ENCODE measurements at regions of chr12 and their contacts with region 1.

Region 1: GRCh38 chr12:9331218-9331626 is 123.0 kb upstream of the PZP start:
- DNase-seq: peak; percentile 44
- ATAC-seq: peak; percentile 78
- H3K4me3 ChIP-seq: no peak overlapping the region
- H3K27ac ChIP-seq: no peak overlapping the region
- H3K4me1 ChIP-seq: peaks cover 47% of the 10 kb centered on the region
- H3K27me3 ChIP-seq: no peaks in the 10 kb centered on the region
- CTCF ChIP-seq: peak; percentile 98
- EP300 ChIP-seq: no peak
- POLR2A ChIP-seq: no peak
- RAD21 ChIP-seq: peak; percentile 92

Region 2: GRCh38 chr12:9260931-9261330 is 70.3 kb before region 1 on chr12:
- CTCF ChIA-PET with region 1: no interaction called
- POLR2A ChIA-PET with region 1: no interaction called
- in situ Hi-C with region 1: no loop called
- intact Hi-C with region 1: no loop called
- DNase-seq: no peak
- ATAC-seq: no peak
- H3K4me3 ChIP-seq: no peak overlapping the region
- H3K27ac ChIP-seq: no peak overlapping the region
- H3K4me1 ChIP-seq: peaks cover 7% of the 10 kb centered on the region; the same call in 1 of the 2 replicates
- H3K27me3 ChIP-seq: no peaks in the 10 kb centered on the region
- CTCF ChIP-seq: no peak
- EP300 ChIP-seq: no peak
- POLR2A ChIP-seq: no peak
- RAD21 ChIP-seq: no peak

Region 3: GRCh38 chr12:9372202-9372601 is 41.0 kb after region 1 on chr12:
- CTCF ChIA-PET with region 1: interaction called, 16 read pairs
- POLR2A ChIA-PET with region 1: interaction called, 3 read pairs
- in situ Hi-C with region 1: loop called (anchors 10 kb)
- intact Hi-C with region 1: loop called (anchors 1 kb)
- DNase-seq: peak; percentile 54
- ATAC-seq: peak; percentile 96
- H3K4me3 ChIP-seq: no peak overlapping the region
- H3K27ac ChIP-seq: no peak overlapping the region
- H3K4me1 ChIP-seq: peaks cover 14% of the 10 kb centered on the region; the same call in 1 of the 2 replicates
- H3K27me3 ChIP-seq: no peaks in the 10 kb centered on the region
- CTCF ChIP-seq: peak; percentile 74
- EP300 ChIP-seq: no peak
- POLR2A ChIP-seq: no peak
- RAD21 ChIP-seq: peak; percentile 39; the same call in 1 of the 2 replicates

Region 4: DNA sequence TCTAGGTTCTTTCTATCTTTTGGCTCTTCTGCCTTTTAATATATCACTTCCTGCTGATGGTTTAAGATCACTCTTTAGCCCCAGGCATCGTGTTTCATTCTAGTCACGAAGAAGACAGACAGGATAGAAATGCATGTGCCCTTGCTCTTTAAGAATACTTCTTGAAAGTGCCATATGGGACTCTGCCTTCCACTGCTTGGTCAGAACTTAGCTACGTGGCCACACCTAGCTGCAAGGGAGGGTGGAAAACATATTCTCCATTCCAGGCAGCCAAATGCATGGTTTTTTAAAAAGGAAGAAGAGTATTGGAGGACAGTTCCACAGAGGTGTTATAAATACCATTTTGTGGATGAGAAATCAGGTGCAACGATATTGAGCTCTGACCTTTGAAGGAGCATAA is 133.2 kb after region 1 on chr12:
- CTCF ChIA-PET with region 1: interaction called, 12 read pairs
- POLR2A ChIA-PET with region 1: interaction called, 4 read pairs
- in situ Hi-C with region 1: loop called (anchors 25 kb)
- intact Hi-C with region 1: loop called (anchors 2 kb)
- DNase-seq: no peak
- ATAC-seq: no peak
- H3K4me3 ChIP-seq: no peak overlapping the region
- H3K27ac ChIP-seq: no peak overlapping the region
- H3K4me1 ChIP-seq: peaks cover 12% of the 10 kb centered on the region
- H3K27me3 ChIP-seq: no peaks in the 10 kb centered on the region
- CTCF ChIP-seq: no peak
- EP300 ChIP-seq: no peak
- POLR2A ChIP-seq: no peak
- RAD21 ChIP-seq: no peak

Measured in HepG2 (cell line).